Breast epithelium (tissue), 4 donors: ENCODE measurements at regions of chr5 and their contacts with region 1.

Region 1: DNA sequence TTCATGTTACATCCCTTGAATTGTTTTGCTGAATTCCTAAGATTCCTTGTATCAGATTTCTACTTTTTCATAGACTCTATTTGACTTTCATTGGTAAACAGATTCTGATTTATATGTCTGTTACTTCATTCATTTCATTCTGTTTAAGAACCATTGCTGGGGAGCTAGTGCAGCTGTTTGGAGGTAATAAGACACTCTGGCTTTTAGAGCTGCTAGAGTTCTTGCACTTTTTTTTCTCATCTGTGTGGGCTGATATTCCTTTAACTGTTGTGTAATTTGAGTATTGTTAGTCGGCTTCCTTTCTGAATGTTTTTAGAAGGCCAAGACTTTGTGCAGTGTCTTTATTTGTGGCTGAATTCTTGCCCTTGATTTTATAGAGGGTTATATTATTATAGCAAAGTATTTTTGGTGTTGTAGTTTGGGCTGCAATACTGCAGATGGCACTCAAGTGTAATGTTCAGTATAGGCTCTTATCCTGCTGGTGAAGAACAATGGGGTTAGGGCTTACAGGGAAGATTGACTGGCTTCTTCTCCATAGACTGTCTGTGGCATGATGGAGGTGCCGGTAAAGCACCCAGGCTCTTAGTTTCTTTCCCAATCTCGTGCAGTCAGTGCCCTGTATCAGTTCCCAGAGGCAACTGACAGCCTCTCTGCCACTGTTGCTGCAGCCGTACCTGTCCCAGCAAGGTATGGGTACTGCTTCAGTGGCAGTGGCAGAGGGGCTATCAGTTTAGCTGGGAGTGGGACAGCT is 162.2 kb downstream of the OXCT1 start:
- DNase-seq: no peak
- H3K4me3 ChIP-seq: no peak overlapping the region
- H3K27ac ChIP-seq: no peak overlapping the region
- H3K4me1 ChIP-seq: no peaks in the 10 kb centered on the region
- H3K27me3 ChIP-seq: no peaks in the 10 kb centered on the region
- CTCF ChIP-seq: no peak
- POLR2A ChIP-seq: no peak

Region 2: DNA sequence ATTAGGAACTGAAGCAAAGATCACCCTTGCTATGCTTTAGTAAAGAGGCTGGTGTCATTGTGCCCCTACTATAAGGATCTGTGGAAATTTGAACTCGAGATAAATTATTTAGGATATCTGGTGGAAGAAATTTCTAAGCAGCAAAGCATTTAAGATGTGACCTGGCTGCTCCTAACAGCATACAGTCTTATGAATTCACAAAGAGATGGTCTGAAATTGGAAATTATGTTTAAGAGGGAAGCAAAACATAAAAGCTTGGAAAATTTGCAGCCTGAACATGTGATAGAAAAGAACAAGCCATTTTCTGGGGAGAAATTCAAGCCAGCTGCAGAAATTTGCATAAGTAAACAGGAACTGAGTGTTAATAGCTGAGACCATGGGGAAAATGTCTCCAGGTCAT is 440.8 kb after region 1 on chr5:
- intact Hi-C with region 1: loop called (anchors 5 kb)
- DNase-seq: no peak
- H3K4me3 ChIP-seq: no peak overlapping the region
- H3K27ac ChIP-seq: no peak overlapping the region
- H3K4me1 ChIP-seq: no peaks in the 10 kb centered on the region
- H3K27me3 ChIP-seq: no peaks in the 10 kb centered on the region
- CTCF ChIP-seq: no peak
- POLR2A ChIP-seq: no peak

Region 3: DNA sequence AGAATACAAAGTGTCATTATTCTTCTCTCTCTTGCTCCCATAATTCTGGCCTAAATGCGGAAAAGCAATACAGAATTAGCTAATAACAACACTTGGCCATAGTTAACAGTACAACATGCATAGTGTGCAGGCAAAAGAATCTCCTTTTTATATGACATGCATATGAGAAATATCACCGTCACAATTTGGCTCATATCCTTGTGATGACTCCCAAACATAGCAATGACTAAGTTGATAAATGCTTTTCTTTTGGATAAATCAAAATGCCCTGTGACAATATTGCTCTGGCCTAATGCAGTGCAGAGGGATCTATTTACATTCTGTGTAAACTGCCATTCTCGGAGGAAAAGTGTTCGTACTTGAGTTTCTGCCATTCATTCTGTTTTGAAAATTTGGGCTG is 593.3 kb after region 1 on chr5:
- intact Hi-C with region 1: loop called (anchors 10 kb)
- DNase-seq: no peak
- H3K4me3 ChIP-seq: no peak overlapping the region
- H3K27ac ChIP-seq: no peak overlapping the region
- H3K4me1 ChIP-seq: no peaks in the 10 kb centered on the region
- H3K27me3 ChIP-seq: no peaks in the 10 kb centered on the region
- CTCF ChIP-seq: no peak
- POLR2A ChIP-seq: no peak